Naive thymus-derived CD4-positive, alpha-beta T cell (primary cell): ENCODE measurements at regions of chr10 and their contacts with region 1.

Region 1: DNA sequence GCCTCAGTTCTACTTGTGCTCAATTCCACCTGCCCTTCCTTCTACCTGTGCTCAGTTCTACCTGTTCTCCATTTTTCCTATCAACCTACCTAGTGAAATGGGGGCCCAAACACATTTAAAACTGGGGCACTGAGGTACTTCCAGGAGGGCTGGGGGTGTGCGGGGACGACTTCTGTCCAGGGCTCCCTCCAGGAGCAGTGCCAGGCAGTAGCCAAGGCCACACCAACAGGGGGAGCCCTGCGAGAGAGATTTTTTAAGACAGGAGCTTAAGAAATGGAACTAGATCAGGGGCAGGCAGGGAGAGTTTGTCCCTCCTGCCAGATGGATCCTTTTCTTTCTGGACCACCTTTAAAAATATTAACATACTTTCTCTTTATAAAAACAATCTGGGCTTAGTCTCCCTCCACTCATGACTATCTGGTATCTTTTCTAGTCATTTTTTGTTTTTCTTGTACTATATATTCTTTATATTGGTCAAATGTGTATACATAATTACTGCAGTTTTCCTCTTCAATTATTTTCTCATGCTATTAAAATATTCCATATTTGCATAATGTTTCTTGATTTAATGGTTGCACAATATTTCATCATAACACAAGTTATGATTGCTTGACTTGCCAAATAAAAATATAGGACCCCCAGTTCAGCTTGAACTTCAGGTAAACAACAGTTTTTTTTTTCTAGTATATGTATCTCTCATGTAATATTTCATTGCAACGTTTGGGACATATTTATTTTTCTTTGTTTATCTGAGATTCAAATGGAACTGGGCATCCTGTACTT is 47.3 kb upstream of the INSYN2A start:
- DNase-seq: peak in 6 of 9 donors; percentile 11 to 31 (median 24)
- ATAC-seq: peak; percentile 59
- H3K4me3 ChIP-seq: no peak overlapping the region
- H3K4me3 Mint-ChIP-seq: no peak overlapping the region
- H3K27ac ChIP-seq: no peak overlapping the region
- H3K27ac Mint-ChIP-seq: peak overlapping the region in 1 of 9 donors; percentile 39
- H3K4me1 ChIP-seq: no peaks in the 10 kb centered on the region
- H3K4me1 Mint-ChIP-seq: peaks cover 0 to 4% (median 0%) of the 10 kb centered on the region in 7 donors
- H3K27me3 ChIP-seq: no peaks in the 10 kb centered on the region
- H3K27me3 Mint-ChIP-seq: peaks cover 4 to 16% (median 6%) of the 10 kb centered on the region in 5 donors

Region 2: GRCh38 chr10:126895214-126895781 is 348.4 kb before region 1 on chr10:
- CTCF ChIA-PET with region 1: no interaction called
- POLR2A ChIA-PET with region 1: no interaction called
- intact Hi-C with region 1: no loop called
- DNase-seq: no peak
- ATAC-seq: no peak
- H3K4me3 ChIP-seq: no peak overlapping the region
- H3K4me3 Mint-ChIP-seq: no peak overlapping the region
- H3K27ac ChIP-seq: no peak overlapping the region
- H3K27ac Mint-ChIP-seq: no peak overlapping the region
- H3K4me1 ChIP-seq: no peaks in the 10 kb centered on the region
- H3K4me1 Mint-ChIP-seq: peaks cover 0 to 3% (median 0%) of the 10 kb centered on the region in 7 donors
- H3K27me3 ChIP-seq: no peaks in the 10 kb centered on the region
- H3K27me3 Mint-ChIP-seq: peaks cover 0 to 9% (median 4%) of the 10 kb centered on the region in 5 donors

Region 3: GRCh38 chr10:127354992-127355391 is 111.3 kb after region 1 on chr10:
- CTCF ChIA-PET with region 1: interaction called, 3 read pairs
- POLR2A ChIA-PET with region 1: no interaction called
- intact Hi-C with region 1: loop called (anchors 10 kb)
- DNase-seq: no peak
- ATAC-seq: no peak
- H3K4me3 ChIP-seq: no peak overlapping the region
- H3K4me3 Mint-ChIP-seq: no peak overlapping the region
- H3K27ac ChIP-seq: no peak overlapping the region
- H3K27ac Mint-ChIP-seq: no peak overlapping the region
- H3K4me1 ChIP-seq: no peaks in the 10 kb centered on the region
- H3K4me1 Mint-ChIP-seq: no peaks in the 10 kb centered on the region
- H3K27me3 ChIP-seq: no peaks in the 10 kb centered on the region
- H3K27me3 Mint-ChIP-seq: peaks cover 0 to 15% (median 0%) of the 10 kb centered on the region in 5 donors